ENCODE measurements at regions of chr3 and their contacts with region 1.

Region 1: DNA sequence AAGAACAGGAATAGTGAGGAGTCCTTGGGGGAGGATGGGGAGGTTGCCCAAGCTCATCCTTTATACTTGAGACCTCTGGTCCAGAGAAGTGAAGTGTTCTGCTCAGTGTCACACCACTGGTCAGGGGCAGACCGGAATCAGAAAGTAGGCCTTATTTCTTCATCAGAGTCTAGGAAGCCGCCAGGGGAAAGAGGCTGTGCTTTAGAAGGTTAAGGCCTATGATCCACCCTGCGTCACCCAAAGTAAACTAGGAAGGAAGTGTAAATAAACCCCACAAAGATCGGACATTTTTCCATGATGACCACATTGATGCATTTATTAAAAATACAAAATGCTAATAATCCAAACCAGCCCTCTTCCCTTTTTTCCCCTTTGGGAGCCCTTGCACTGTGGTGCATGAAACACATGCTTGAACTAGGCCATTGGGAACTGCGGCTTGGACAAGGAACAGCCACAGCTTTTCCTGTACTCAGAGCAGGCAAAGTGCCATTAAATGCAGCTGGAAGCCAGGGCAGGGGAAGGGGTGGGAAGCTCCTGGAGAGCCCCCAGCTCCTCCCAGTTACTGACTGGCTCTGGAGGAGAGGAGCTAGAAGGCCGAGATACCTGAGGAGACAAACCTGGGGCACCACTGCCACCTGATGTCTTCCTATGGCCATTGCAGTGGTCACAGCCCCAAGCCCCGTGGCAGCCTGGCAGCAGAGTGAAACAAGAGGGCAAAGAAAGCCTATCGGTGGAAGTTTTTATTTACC is 37.0 kb downstream of the CDC25A start:
- DNase-seq: peak; percentile 85
- CTCF ChIP-seq: peak; percentile 88

Region 2: GRCh38 chr3:47813551-47814177 is 337.6 kb before region 1 on chr3:
- CTCF ChIA-PET with region 1: interaction called, 14 read pairs
- POLR2A ChIA-PET with region 1: no interaction called
- DNase-seq: no peak
- CTCF ChIP-seq: no peak

Region 3: DNA sequence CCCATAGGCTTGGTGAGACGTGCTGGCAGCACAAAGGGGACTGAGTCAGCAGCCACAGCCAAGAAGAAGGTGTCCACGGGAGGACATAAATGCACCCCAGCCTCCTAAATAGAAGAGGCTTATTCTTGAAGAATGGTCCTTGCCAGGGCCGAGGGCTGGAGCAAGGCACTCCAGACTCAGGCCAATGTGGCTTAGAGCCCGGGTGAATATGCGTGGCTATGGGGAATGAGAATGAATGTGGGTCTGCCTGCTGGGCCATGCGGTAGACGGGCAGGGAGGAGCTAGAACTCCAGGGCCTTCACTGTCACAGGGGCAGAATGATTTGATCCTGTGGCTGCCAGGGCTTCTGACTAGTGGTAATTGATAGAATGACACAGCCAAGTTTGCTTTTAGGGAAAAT is 314.2 kb before region 1 on chr3:
- CTCF ChIA-PET with region 1: interaction called, 73 read pairs
- POLR2A ChIA-PET with region 1: no interaction called
- DNase-seq: no peak
- CTCF ChIP-seq: no peak

Region 4: GRCh38 chr3:47989981-47990440 is 161.2 kb before region 1 on chr3:
- CTCF ChIA-PET with region 1: interaction called, 16 read pairs
- POLR2A ChIA-PET with region 1: no interaction called
- DNase-seq: peak; percentile 70
- CTCF ChIP-seq: peak; percentile 85

Region 5: GRCh38 chr3:48034000-48034516 is 117.2 kb before region 1 on chr3:
- CTCF ChIA-PET with region 1: interaction called, 10 read pairs
- POLR2A ChIA-PET with region 1: no interaction called
- DNase-seq: peak; percentile 42
- CTCF ChIP-seq: no peak

Region 6: DNA sequence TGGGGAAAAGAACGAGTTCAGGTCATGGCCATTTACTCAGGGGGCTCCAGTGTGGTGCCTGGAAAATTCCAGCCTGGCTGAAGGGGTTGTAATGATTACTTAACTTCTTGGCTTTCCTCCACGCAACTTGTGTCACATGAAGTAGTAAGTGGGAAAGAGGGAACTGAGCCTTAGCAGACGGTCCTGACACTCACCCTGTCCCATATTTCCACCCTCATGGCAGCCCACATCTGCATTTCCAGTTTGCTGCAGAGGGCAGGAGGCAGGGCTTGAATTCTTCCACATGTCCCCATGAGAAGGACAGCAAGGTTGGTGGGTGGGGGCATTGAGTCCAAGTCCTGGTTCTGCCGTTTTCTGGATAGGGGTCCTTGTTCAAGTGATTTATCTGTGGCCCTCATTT is 64.2 kb after region 1 on chr3:
- CTCF ChIA-PET with region 1: no interaction called
- POLR2A ChIA-PET with region 1: no interaction called
- DNase-seq: no peak
- CTCF ChIP-seq: no peak

Measured in GM10248 (cell line).